Uterus (tissue), 4 donors: ENCODE measurements at regions of chr14 and their contacts with region 1.

Region 1: DNA sequence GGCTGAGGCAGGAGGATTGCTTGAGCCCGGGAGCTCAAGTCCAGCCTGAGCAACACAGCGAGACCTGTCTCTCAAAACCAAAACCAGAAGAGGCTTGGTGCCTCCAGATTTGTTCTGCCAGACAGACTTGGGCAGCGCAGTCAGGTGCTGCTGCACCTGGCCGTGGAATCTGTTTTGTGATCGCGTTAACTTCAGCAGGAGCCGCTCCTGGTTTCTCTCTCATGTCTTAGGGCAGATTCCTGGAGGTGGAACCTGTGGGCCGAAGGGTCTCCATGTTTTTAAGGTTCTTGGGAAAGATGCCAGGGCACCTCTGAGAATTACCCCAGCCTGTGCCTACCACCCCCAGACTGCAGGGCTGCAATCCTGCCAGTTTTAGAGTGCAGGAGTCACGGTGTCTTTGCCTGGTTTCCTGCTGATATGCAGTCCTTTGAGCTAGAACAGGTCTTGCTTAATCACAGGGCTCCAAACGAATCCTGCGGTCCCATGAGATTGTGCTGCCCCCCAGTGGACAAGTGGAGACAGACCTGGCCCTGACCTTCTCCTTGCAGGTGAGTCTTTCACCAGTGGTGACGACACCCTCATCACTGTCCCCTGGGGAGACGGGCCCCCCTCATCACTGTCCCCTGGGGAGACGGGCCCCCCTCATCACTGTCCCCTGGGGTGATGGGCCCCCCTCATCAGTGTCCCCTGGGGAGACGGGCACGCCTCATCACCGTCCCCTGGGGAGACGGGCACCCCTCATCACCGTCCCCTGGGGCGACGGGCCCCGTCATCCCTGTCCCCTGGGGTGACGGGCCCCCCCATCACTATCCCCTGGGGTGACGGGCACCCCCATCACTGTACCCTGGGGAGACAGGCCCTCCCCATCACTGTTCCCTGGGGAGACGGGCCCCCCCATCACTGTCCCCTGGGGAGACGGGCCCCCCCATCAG is 37.6 kb downstream of the PACS2 start:
- DNase-seq: peak; percentile 83 to 86
- H3K4me3 ChIP-seq: no peak overlapping the region
- H3K27ac ChIP-seq: no peak overlapping the region
- H3K4me1 ChIP-seq: no peaks in the 10 kb centered on the region
- H3K27me3 ChIP-seq: no peaks in the 10 kb centered on the region
- CTCF ChIP-seq: peak; percentile 80 to 93 (median 84)
- POLR2A ChIP-seq: no peak

Region 2: DNA sequence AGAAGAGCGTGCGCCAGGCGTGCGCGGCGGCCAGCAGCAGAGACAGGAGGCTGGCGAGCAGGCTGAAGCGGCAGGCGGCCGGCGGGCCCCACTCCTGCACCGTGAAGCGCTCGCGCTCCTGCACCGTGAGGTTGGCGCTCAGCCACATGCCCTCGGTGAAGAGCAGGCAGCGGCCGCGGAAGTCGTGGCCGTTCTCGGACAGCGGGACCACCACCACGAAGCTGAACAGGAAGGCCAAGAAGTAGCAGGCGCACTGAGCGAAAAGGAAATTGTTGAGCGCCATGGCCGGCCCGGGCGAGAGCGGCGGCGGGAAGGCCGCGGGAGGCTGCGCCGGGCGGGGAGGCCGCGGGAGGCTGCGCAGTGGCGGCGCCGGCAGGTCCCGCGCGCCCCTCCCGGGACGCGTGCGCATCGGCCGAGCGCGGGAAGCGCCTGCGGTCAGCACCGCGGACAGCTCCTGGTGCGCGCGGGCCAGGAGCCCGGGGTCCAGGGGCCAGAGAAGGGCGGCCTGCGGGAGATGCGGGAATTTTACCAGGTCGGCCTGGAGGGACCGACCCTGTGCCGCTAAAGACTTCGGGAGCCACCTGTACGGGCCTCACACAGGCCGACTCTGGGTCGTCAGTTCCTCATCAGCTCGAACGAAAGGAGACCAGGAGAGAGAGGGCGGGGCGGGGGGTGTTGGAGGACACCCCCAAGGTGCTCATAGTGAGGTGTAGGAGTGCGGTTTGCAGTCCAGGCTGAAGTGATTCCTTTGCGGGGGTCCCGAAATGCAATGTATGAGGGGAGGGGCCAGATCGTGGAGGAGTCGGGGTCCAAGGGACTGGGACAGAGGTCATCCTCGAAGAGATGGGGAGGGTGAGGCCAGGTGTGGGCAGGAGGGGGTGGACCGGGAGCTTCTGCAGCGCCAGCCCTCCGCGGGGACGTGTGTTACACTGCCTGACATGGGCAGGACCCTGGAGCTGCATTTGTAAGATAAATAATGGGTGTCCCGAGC is 747.4 kb before region 1 on chr14 and contains the start of gene TMEM179:
- intact Hi-C with region 1: no loop called
- DNase-seq: no peak
- H3K4me3 ChIP-seq: no peak within 1 kb of the TSS
- H3K27ac ChIP-seq: no peak within 1 kb of the TSS
- H3K4me1 ChIP-seq: peaks cover 0 to 7% of the 10 kb centered on the region in 2 donors
- H3K27me3 ChIP-seq: peaks cover 7 to 8% of the 10 kb centered on the region in 2 donors
- CTCF ChIP-seq: no peak
- POLR2A ChIP-seq: no peak
- total RNA-seq, gene TMEM179: 2.3 TPM in 1 of 4 donors, not detected in the others

Region 3: GRCh38 chr14:104973300-104974145 is 378.7 kb before region 1 on chr14:
- intact Hi-C with region 1: no loop called
- DNase-seq: peak; percentile 90 to 95
- H3K4me3 ChIP-seq: peak overlapping the region; percentile 15
- H3K27ac ChIP-seq: peak overlapping the region; percentile 95 to 99
- H3K4me1 ChIP-seq: peaks cover 30 to 53% of the 10 kb centered on the region in 2 donors
- H3K27me3 ChIP-seq: no peaks in the 10 kb centered on the region
- CTCF ChIP-seq: peak in 1 of 4 experiments; percentile 25
- POLR2A ChIP-seq: no peak

Region 4: DNA sequence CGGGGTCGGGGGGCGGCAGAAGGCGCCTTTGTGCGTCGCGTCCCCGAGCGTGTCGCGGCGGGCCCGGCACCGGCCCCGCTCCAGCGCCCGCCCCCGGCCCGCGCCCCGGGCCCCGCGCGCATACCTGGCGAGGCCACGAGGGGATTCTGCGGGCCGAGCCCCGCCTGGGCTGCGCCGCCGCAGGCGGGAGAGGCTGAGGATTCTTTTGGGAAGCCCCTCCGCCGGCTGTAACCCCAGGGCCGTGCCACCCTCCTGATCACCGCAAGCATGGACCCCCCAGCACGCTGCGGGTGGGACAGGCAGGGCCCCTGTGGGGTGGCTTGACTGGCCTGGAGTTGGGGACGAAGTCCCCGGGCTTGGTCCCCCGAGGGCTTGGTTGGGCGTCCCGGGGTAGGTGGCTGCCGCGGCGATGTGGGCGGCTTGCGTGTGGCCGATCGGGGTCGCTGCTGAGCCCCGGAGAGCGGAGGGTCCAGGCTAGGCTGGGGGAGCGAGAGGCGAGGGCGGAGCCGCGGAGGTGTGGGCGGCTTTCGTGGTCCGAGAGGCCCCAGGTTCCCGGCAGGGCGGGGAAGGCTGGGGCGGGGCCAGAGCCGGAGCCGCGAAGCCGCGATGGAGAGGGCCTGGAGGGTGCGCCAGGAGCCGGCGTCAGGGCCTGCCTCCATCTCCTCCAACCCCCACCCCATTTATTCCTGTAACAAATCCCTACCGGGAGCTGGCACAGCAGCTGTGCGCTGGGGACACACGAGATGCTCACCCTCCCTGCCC is 258.6 kb before region 1 on chr14:
- intact Hi-C with region 1: no loop called
- DNase-seq: peak; percentile 76 to 87
- H3K4me3 ChIP-seq: peak overlapping the region; percentile 65 to 70
- H3K27ac ChIP-seq: peak overlapping the region; percentile 92 to 97
- H3K4me1 ChIP-seq: peaks cover 3 to 24% of the 10 kb centered on the region in 2 donors
- H3K27me3 ChIP-seq: no peaks in the 10 kb centered on the region
- CTCF ChIP-seq: peak; percentile 33 to 65 (median 44)
- POLR2A ChIP-seq: peak in 1 of 2 donors; percentile 34

Region 5: DNA sequence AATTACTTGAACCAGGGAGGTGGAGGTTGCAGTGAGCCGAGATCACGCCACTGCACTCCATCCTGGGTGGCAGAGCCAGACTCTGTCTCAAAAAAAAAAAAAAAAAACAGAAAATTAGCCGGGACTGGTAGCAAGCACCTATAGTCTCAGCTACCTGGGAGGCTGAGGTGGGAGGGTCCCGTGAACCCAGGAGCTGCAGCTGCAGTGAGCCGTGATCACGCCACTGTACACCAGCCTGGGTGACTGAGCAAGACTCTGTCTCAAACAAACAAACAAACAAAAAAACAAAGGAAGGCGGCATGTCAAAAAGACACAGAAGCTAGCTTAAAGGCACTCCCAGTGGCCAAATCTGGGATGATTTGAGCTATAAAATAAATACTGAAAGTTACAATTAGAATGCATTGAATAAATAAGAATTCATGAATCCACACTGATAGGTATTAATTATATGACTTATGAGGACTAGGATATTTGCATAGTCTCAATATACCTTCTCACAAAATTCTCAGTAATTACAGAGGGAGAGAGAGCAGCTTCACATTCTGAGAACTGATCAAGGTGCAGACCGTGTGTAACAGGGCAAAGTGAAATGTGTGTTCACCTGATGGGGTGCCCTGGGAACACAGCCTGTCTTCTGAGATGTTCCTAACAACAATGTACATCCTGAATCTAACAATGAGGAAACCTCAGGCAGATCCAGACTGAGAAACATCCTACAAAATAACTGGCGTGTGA is 244.2 kb before region 1 on chr14:
- intact Hi-C with region 1: no loop called
- DNase-seq: no peak
- H3K4me3 ChIP-seq: no peak overlapping the region
- H3K27ac ChIP-seq: no peak overlapping the region
- H3K4me1 ChIP-seq: no peaks in the 10 kb centered on the region
- H3K27me3 ChIP-seq: no peaks in the 10 kb centered on the region
- CTCF ChIP-seq: no peak
- POLR2A ChIP-seq: no peak

Region 6: DNA sequence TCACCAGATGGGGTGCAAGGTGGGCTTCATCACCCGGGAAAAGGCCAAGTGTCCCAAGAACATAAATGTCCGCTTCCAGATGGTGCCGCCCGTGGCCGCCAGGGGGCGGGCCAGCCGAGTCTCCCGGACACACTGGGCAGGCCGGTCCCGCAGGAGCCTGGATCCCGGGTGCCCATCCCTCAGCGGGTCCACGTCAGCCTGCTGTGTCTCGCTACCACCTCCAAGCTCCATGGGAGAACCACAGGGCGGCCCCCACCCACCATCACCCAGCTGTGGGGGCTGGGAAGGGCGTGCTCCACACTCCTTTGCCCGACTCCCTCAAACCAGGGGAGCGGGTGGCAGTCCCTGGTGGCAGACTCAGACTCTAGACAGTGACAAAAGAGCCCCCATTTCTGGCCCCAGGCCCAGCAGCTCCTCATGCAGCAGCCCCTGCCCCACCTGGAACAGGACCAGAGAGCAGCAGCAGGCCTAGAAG is 149.1 kb before region 1 on chr14:
- intact Hi-C with region 1: loop called (anchors 5 kb)
- DNase-seq: peak; percentile 69 to 75
- H3K4me3 ChIP-seq: no peak overlapping the region
- H3K27ac ChIP-seq: no peak overlapping the region
- H3K4me1 ChIP-seq: peaks cover 0 to 8% of the 10 kb centered on the region in 2 donors
- H3K27me3 ChIP-seq: peaks cover 0 to 12% of the 10 kb centered on the region in 2 donors
- CTCF ChIP-seq: peak; percentile 90 to 91 (median 90)
- POLR2A ChIP-seq: no peak